CD14-positive monocyte (primary cell): ENCODE measurements at regions of chr6 and their contacts with region 1.

Region 1: GRCh38 chr6:48449002-48449401 is 338.0 kb upstream of the PTCHD4 start:
- DNase-seq: no peak
- H3K4me3 ChIP-seq: no peak overlapping the region
- H3K4me3 Mint-ChIP-seq: no peak overlapping the region
- H3K27ac ChIP-seq: no peak overlapping the region
- H3K27ac Mint-ChIP-seq: no peak overlapping the region
- H3K4me1 ChIP-seq: no peaks in the 10 kb centered on the region
- H3K4me1 Mint-ChIP-seq: no peaks in the 10 kb centered on the region
- H3K27me3 ChIP-seq: no peaks in the 10 kb centered on the region
- H3K27me3 Mint-ChIP-seq: no peaks in the 10 kb centered on the region
- CTCF ChIP-seq: no peak

Region 2: GRCh38 chr6:47879015-47879414 is 570.0 kb before region 1 on chr6:
- intact Hi-C with region 1: loop called in 1 of 2 experiments (anchors 10 kb)
- DNase-seq: no peak
- H3K4me3 ChIP-seq: no peak overlapping the region
- H3K4me3 Mint-ChIP-seq: no peak overlapping the region
- H3K27ac ChIP-seq: no peak overlapping the region
- H3K27ac Mint-ChIP-seq: no peak overlapping the region
- H3K4me1 ChIP-seq: no peaks in the 10 kb centered on the region
- H3K4me1 Mint-ChIP-seq: no peaks in the 10 kb centered on the region
- H3K27me3 ChIP-seq: no peaks in the 10 kb centered on the region
- H3K27me3 Mint-ChIP-seq: peaks cover 0 to 1% (median 0%) of the 10 kb centered on the region in 3 donors
- CTCF ChIP-seq: no peak